ENCODE measurements at regions of chr6 and their contacts with region 1.

Region 1: DNA sequence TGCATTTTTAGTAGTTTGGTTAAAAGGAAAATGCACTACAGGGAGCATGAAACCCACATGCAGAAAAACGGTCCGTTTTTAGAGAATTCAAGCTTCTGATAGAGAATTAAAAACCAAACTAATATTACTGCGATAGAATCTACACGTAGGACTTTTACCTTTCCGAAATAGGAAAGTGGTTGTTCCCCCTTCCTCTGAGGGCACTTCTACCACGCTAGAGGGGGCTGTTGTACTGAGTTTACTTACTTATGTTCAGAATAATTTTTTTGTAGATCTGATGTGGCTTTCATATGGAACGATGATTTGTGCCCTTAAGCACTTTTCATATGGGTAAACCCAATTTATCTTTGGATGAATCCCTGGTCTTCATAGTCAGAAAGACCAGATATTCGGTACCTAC is 264.3 kb upstream of the PLN start:
- DNase-seq: no peak
- H3K4me3 ChIP-seq: no peak overlapping the region
- H3K27ac ChIP-seq: no peak overlapping the region
- H3K4me1 ChIP-seq: no peaks in the 10 kb centered on the region
- H3K27me3 ChIP-seq: no peaks in the 10 kb centered on the region
- CTCF ChIP-seq: peak in 2 of 3 experiments; percentile 35 to 81
- POLR2A ChIP-seq: no peak

Region 2: GRCh38 chr6:118198746-118199145 is 85.0 kb before region 1 on chr6:
- intact Hi-C with region 1: no loop called
- DNase-seq: no peak
- H3K4me3 ChIP-seq: no peak overlapping the region
- H3K27ac ChIP-seq: no peak overlapping the region
- H3K4me1 ChIP-seq: no peaks in the 10 kb centered on the region
- H3K27me3 ChIP-seq: no peaks in the 10 kb centered on the region
- CTCF ChIP-seq: no peak
- POLR2A ChIP-seq: no peak

Region 3: GRCh38 chr6:118325220-118325860 is 41.6 kb after region 1 on chr6:
- intact Hi-C with region 1: loop called (anchors 5 kb)
- DNase-seq: no peak
- H3K4me3 ChIP-seq: no peak overlapping the region
- H3K27ac ChIP-seq: no peak overlapping the region
- H3K4me1 ChIP-seq: peaks cover 7% of the 10 kb centered on the region
- H3K27me3 ChIP-seq: no peaks in the 10 kb centered on the region
- CTCF ChIP-seq: no peak
- POLR2A ChIP-seq: no peak

Region 4: GRCh38 chr6:118509009-118509617 is 225.3 kb after region 1 on chr6:
- intact Hi-C with region 1: loop called (anchors 10 kb)
- DNase-seq: no peak
- H3K4me3 ChIP-seq: no peak overlapping the region
- H3K27ac ChIP-seq: no peak overlapping the region
- H3K4me1 ChIP-seq: no peaks in the 10 kb centered on the region
- H3K27me3 ChIP-seq: no peaks in the 10 kb centered on the region
- CTCF ChIP-seq: no peak
- POLR2A ChIP-seq: no peak

Measured in vagina (tissue), 2 donors.